Activated B cell treated with CpG ODN at 0.5 μM for 24 hours (primary cell): ENCODE measurements at regions of chr7 and their contacts with region 1.

Region 1: GRCh38 chr7:100556541-100556940 is 17.2 kb downstream of the SAP25 start:
- DNase-seq: no peak
- ATAC-seq: no peak
- H3K4me3 Mint-ChIP-seq: no peak overlapping the region
- H3K27ac Mint-ChIP-seq: no peak overlapping the region
- H3K4me1 Mint-ChIP-seq: peaks cover 5% of the 10 kb centered on the region
- H3K27me3 Mint-ChIP-seq: no peaks in the 10 kb centered on the region
- CTCF ChIP-seq: no peak

Region 2: DNA sequence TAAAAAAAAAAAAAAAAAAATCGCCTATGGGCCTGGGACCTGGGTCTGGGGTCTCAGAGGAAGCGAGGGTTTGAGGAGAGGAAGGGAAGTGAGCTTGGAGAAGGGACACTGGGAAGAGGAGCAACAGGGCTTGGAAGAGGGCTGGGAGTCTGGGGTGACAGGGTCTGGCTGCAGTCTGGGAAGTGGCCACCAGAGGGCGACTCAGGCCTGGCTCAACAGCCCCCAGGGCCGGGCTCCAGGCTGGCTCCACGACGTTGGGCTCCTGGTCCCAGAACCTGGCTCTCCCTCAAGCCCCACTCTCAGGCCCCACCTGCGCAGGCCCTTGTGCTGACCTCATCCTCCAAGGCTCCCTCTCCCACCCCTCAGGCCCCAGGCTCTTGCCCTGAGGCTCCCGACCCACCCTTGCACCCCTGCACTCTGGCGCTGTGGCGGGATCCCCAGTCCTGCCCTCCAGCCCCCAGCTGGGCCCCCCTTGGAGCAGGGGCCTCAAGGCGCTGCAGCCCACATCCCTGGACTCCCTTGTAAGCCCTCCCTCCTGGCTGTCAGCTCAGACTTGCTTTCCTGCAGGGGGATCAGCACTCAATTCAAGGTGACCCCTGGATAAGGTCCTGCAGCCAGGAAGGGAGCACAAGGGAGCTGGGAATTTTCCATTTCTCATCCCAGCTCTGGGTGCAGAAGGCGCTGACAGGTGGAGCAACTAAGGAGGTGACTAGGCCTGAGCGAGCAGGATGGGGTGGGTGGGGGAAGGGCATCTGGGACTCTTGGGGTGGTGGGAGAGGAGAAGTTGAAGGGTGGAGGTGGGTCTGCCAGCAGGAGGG is 87.1 kb before region 1 on chr7:
- CTCF ChIA-PET with region 1: interaction called, 33 read pairs
- POLR2A ChIA-PET with region 1: interaction called, 5 read pairs
- intact Hi-C with region 1: loop called (anchors 1 kb)
- DNase-seq: peak; percentile 81
- ATAC-seq: peak; percentile 91
- H3K4me3 Mint-ChIP-seq: no peak overlapping the region
- H3K27ac Mint-ChIP-seq: peak overlapping the region; percentile 46
- H3K4me1 Mint-ChIP-seq: peaks cover 24% of the 10 kb centered on the region
- H3K27me3 Mint-ChIP-seq: no peaks in the 10 kb centered on the region
- CTCF ChIP-seq: no peak

Region 3: DNA sequence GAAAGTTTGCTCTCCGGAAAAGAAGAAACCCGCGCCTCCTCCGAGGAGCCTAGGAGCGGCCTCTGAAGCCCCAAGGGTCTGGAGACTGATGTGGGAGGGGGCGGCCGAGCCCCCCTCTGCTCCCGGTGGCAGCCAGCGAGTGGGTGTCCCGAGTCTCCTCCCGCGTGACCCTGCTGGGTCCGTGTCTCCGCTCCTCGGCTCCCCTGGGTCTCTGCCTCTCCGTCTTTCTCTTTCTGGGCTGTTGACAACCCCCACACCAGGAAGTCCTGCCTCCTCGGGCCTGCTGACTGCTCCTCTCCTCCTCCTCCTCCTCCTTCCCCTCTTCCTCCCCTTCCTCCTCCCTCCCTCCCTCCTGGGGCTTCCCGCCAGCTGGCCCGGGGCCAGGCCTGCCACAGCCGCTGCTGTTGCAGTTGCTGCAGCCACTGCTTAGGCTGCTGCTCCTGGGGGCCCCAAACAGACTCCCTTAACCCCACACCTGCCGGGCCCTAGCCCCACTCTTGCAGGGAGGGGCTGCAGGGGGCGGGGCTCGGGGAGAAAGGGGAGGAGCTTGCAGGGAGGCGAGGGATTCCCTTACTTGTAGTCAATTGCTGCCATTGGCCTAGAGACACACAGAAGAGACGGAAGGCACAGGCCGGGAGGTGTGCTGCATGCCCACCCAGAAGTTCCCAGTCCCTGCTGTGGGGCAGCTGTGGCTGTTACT is 77.4 kb before region 1 on chr7 and contains the start of gene TSC22D4:
- CTCF ChIA-PET with region 1: interaction called, 11 read pairs
- POLR2A ChIA-PET with region 1: interaction called, 11 read pairs
- intact Hi-C with region 1: loop called (anchors 1 kb)
- DNase-seq: peak; percentile 81
- ATAC-seq: peak; percentile 73
- H3K4me3 Mint-ChIP-seq: peak within 1 kb of the TSS; percentile 93
- H3K27ac Mint-ChIP-seq: peak within 1 kb of the TSS; percentile 86
- H3K4me1 Mint-ChIP-seq: peaks cover 41% of the 10 kb centered on the region
- H3K27me3 Mint-ChIP-seq: no peaks in the 10 kb centered on the region
- CTCF ChIP-seq: no peak
- total RNA-seq, gene TSC22D4: 60.2 and 68.7 TPM in 2 replicates

Region 4: DNA sequence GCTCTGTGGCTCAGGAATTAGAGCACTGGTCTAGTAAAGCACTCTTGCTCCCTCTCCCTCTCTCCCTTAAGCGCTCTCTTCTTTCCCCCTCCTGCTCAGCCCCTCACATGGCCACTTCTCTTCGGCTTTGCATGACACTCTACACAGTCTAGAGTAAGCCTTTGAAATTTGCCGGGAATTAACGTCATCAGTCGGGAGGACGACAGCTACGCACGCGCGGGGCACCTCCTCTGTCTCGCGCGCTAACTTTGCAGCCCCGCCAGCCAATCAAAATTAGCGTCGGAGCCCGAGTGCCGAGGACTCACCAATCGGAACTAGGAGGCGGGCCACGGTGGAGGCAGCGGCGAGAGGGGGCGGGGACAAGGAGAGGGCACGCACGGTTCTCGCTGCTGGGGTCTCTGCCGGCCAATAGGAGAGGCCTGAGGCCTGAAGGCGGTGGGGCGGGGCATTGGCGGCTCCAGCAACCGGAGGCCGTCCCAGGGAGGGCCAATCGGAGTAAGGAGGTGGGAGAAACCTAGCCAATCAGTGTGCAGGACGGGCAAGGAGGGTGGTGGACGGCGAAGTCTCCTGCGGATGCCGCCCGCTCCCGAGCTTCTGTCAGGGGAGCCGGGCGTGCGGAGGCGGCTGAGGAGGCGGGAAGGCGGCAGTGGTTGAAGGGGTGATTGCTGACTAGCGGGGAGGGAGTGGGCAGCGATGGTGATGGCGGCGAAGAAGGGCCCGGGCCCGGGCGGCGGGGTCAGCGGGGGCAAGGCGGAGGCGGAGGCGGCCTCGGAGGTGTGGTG is 17.7 kb before region 1 on chr7 and contains the start of gene AGFG2:
- CTCF ChIA-PET with region 1: interaction called, 13 read pairs
- POLR2A ChIA-PET with region 1: interaction called, 4 read pairs
- intact Hi-C with region 1: loop called (anchors 1 kb)
- DNase-seq: peak; percentile 97
- ATAC-seq: peak; percentile 98
- H3K4me3 Mint-ChIP-seq: peak within 1 kb of the TSS; percentile 100
- H3K27ac Mint-ChIP-seq: peak within 1 kb of the TSS; percentile 87
- H3K4me1 Mint-ChIP-seq: peaks cover 32% of the 10 kb centered on the region
- H3K27me3 Mint-ChIP-seq: no peaks in the 10 kb centered on the region
- CTCF ChIP-seq: no peak
- total RNA-seq, gene AGFG2: 9.5 and 10.8 TPM in 2 replicates

Region 5: DNA sequence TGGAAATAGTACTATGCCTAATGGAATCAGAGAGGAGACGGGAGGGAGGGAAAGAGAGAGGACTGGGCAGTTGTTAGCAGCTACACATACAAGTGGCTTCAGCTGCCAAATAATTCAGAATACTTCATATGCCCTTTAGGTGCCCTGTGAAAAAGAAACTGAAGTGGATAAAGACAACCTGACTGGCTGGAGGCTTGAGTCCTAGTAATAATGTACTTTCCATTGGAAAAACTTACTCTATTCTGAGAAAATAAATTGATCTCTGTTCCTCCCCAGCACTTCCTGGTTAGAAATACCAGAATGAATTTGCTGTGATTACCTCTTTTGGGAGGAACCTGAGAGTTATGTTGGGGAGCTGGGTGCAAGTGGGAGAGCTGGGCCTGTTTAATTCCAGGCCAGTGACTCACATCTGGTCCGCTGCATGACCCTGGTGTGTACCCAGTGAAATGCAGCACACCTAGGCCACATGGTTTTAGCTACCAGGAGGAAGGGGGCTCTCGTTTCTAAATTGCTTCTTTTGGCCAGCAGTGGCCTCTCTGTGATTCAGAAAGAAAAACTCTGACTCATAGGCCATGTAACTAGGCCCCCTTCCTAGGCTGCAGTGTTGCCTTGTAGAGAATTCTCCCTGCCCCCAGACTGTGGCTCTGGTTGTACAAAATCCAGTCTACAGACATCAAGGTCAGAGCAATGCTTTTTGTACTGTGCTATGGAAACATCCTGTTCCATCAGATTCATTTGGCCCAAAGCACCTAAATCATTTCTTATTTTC is 11.0 kb before region 1 on chr7:
- CTCF ChIA-PET with region 1: interaction called, 13 read pairs
- POLR2A ChIA-PET with region 1: interaction called, 6 read pairs
- intact Hi-C with region 1: loop called (anchors 1 kb)
- DNase-seq: no peak
- ATAC-seq: peak; percentile 59
- H3K4me3 Mint-ChIP-seq: peak overlapping the region; percentile 32
- H3K27ac Mint-ChIP-seq: peak overlapping the region; percentile 80
- H3K4me1 Mint-ChIP-seq: peaks cover 77% of the 10 kb centered on the region
- H3K27me3 Mint-ChIP-seq: no peaks in the 10 kb centered on the region
- CTCF ChIP-seq: no peak

Region 6: DNA sequence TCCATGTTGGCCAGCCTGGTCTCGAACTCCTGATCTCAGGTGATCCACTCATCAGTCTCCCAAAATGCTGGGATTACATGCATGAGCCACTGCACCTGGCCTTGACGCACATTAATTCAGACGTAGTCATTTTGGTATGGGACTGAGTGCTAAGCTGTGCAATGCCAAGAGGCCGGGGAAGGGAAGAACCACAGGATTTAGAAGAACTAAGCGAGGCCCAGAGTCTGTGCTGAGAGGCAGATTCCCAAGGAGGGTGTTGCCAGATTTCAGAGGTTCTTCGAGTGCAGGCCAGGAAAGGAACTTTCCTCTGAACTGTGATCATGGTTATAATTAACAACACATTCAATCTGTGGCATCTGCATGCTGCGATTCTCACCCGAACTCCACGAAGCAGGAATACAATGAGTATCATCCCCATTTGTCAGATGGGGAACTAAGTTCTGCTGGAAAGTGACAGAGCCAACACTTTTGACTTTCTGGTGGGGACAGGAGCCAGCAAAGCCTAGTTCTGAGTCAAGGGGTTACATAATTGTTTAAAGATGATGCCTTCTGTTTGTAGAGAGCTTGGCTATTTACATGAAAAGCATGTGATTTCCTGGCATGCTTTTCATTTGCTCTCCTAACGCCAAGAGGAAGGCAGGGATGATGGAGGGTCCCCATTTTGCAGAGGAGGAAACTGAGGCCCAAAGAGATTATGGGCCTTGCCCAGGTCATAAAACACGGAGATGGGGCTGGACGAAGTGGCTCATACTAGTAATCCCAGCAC is 170.6 kb after region 1 on chr7:
- CTCF ChIA-PET with region 1: interaction called, 7 read pairs
- POLR2A ChIA-PET with region 1: no interaction called
- intact Hi-C with region 1: loop called (anchors 1 kb)
- DNase-seq: no peak
- ATAC-seq: no peak
- H3K4me3 Mint-ChIP-seq: no peak overlapping the region
- H3K27ac Mint-ChIP-seq: no peak overlapping the region
- H3K4me1 Mint-ChIP-seq: peaks cover 5% of the 10 kb centered on the region
- H3K27me3 Mint-ChIP-seq: peaks cover 19% of the 10 kb centered on the region
- CTCF ChIP-seq: no peak